ENCODE measurements at regions of chr17 and their contacts with region 1.

Region 1: GRCh38 chr17:80147035-80147836 is at the start of gene EIF4A3:
- DNase-seq: peak; percentile 89 to 99 (median 97)
- ATAC-seq: peak; percentile 88 to 94 (median 94)
- H3K4me3 ChIP-seq: peak within 1 kb of the TSS; percentile 90 to 92
- H3K4me3 Mint-ChIP-seq: peak within 1 kb of the TSS; percentile 96 to 99 (median 99)
- H3K27ac ChIP-seq: peak within 1 kb of the TSS; percentile 79
- H3K27ac Mint-ChIP-seq: peak within 1 kb of the TSS; percentile 96
- H3K4me1 ChIP-seq: peaks cover 12 to 40% of the 10 kb centered on the region in 2 experiments
- H3K4me1 Mint-ChIP-seq: peaks cover 40 to 50% (median 47%) of the 10 kb centered on the region in 3 donors
- H3K27me3 ChIP-seq: no peaks in the 10 kb centered on the region
- H3K27me3 Mint-ChIP-seq: no peaks in the 10 kb centered on the region
- total RNA-seq, gene EIF4A3: 70.1 to 105 (median 71.4) TPM

Region 2: DNA sequence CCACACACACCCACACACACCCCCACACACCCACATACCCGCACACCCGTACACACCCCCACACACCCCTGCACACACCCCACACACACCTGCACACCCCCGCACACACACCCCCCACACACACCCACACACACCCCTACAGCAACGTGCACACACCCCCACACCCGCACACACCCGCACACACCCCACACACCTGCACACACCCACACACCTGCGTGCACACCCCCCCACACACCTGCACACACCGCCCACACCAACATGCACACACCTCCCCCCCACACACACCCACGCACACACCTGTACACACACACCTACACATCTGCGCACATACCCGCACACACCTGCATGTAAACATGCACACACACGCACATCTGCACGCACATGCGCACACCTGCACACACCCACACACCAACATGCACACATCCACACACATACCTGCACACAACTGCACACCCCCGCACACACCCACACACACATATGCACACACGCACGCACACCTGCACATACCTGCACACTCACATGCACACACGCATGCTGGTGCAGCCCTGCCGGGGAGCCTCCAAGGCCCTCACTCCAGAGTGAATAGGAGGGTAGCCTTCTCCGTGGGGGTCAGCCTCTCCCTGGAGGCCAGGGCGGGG is 1837.7 kb after region 1 on chr17:
- CTCF ChIA-PET with region 1: no interaction called
- POLR2A ChIA-PET with region 1: interaction called in 1 of 2 experiments, 11 read pairs
- DNase-seq: no peak
- ATAC-seq: no peak
- H3K4me3 ChIP-seq: no peak overlapping the region
- H3K4me3 Mint-ChIP-seq: no peak overlapping the region
- H3K27ac ChIP-seq: no peak overlapping the region
- H3K27ac Mint-ChIP-seq: no peak overlapping the region
- H3K4me1 ChIP-seq: peaks cover 10 to 22% of the 10 kb centered on the region in 2 experiments
- H3K4me1 Mint-ChIP-seq: peaks cover 16 to 24% (median 24%) of the 10 kb centered on the region in 3 donors
- H3K27me3 ChIP-seq: no peaks in the 10 kb centered on the region
- H3K27me3 Mint-ChIP-seq: no peaks in the 10 kb centered on the region